ENCODE measurements at regions of chr14 and their contacts with region 1.

Region 1: DNA sequence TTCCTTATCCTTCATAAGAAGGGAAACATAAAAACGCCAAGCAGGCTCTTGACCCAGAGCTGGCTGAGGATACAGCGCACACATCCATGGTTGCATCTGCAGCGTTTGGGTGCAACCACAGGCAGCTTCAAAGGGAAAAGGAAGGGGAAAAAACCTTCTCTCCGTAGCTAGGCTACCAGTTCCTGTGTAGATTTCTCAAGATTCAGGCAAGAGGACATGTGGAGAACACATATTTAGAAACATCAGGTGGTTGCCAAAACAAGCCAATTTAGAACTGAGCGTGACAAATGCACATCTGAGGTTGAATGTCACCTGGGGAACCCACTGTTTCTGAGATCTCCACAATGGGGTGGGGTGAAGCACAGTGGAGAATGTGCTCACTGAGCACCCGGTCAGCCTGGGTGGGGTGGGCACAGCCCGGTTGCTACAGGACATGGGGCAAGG is 78.3 kb upstream of the BDKRB2 start:
- DNase-seq: no peak
- H3K4me3 ChIP-seq: no peak overlapping the region
- CTCF ChIP-seq: no peak

Region 2: DNA sequence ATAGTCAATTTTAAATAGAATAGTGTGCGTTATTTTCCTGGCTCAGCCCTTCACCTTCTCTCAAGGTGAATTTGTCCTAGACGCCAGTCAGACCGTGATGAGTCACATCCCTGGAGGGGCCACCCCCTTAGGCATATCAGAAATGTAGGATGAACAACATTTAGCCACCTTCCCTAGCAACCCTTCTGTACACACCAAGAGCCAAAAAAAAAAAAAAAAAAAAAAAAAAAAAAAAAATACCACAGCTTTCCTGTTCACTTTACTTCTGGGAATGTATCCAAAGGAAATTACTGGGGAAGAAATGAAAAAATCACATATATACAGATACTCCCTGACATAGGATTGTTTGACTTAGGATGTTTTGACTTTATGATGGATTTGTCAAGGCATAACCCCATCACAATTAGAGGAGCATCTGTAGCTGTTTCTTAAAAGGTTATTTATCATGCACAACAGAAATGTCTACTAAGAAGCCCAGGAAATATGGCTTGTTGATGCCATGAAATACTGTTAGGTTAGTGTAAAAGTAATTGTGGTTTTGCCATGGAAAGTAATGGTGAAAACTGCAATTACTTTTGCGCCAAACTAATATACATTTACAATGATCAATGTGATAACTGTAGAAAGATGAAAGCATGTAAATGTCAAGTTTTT is 10.1 kb after region 1 on chr14:
- CTCF ChIA-PET with region 1: interaction called, 14 read pairs
- POLR2A ChIA-PET with region 1: no interaction called
- DNase-seq: peak; percentile 41
- H3K4me3 ChIP-seq: no peak overlapping the region
- CTCF ChIP-seq: no peak

Region 3: GRCh38 chr14:96252999-96253539 is 126.7 kb after region 1 on chr14:
- CTCF ChIA-PET with region 1: no interaction called
- POLR2A ChIA-PET with region 1: no interaction called
- DNase-seq: peak; percentile 81
- H3K4me3 ChIP-seq: no peak overlapping the region; the same call in 1 of the 2 replicates
- CTCF ChIP-seq: no peak

Measured in AG04449 (cell line).